HepG2 (cell line): ENCODE measurements at regions of chr12 and their contacts with region 1.

Region 1: DNA sequence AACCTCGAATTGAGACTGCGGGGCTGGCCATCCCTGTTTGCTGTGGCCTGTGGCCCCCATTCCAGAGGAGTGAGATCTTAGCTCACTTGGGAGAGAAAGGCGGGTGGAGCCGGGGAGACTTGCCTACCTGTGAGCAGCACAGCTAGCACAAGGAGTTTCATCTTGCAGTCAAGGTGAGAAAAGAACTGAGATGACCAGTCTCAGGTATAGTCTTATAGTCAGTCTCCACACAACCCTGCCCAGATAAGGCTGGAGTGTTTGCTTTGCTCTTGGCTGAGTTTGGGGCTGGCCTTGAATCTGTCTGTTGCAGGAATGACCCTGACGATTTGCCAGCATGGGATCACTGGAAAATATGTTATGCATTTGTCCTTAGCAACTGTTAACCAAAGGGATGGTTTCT is at the start of gene PLA2G1B:
- DNase-seq: peak; percentile 44
- ATAC-seq: peak; percentile 75
- H3K4me3 ChIP-seq: no peak within 1 kb of the TSS; a peak in 1 of 6 replicates
- H3K27ac ChIP-seq: peak within 1 kb of the TSS; percentile 40
- H3K4me1 ChIP-seq: peaks cover 50% of the 10 kb centered on the region
- H3K27me3 ChIP-seq: peaks cover 0 to 2% of the 10 kb centered on the region in 2 experiments; a peak in 1 of 5 replicates
- CTCF ChIP-seq: no peak
- EP300 ChIP-seq: no peak
- POLR2A ChIP-seq: no peak
- RAD21 ChIP-seq: no peak
- total RNA-seq, gene PLA2G1B: 0.87 and 1.4 TPM in 2 replicates

Region 2: DNA sequence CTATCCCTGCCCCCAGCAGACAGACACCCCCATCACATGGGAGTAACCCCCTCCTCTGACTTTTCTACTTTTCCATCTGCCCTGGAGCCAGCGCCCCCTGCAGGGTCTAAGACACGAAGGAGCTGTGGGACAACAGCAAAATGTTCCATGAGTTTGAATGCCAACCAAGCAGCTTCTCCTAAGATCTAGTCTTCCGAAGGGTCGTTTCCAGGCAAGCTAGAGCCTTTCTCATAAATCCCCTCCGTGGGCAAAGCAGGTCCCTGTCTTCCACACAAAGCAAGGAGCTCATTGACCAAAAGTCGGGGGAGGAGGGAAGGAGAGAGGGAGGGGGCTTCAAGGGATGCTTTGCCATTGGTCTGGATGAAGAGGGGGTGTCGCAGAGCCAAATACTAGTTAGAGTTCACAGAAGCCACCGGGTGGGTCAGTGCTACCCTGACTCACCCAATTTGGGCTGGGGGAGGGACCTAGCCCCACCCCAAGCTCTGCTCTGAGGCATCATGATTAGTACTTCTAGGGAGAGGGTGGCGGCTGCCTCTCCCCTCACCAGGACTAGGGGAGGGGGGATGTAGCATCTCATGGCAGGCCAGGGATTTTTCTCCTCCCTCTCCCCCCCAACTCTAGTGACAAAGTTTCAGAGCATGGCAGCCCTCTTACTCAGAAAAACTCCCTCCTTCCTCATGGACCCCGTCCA is 39.8 kb after region 1 on chr12:
- CTCF ChIA-PET with region 1: no interaction called
- POLR2A ChIA-PET with region 1: no interaction called
- in situ Hi-C with region 1: no loop called
- intact Hi-C with region 1: loop called (anchors 5 kb)
- DNase-seq: no peak
- ATAC-seq: no peak
- H3K4me3 ChIP-seq: no peak overlapping the region; a peak in 1 of 6 replicates
- H3K27ac ChIP-seq: no peak overlapping the region
- H3K4me1 ChIP-seq: peaks cover 40% of the 10 kb centered on the region
- H3K27me3 ChIP-seq: peaks cover 9 to 43% of the 10 kb centered on the region in 2 experiments; a peak in 4 of 5 replicates
- CTCF ChIP-seq: peak; percentile 56
- EP300 ChIP-seq: no peak
- POLR2A ChIP-seq: no peak
- RAD21 ChIP-seq: no peak

Region 3: GRCh38 chr12:120528861-120529525 is 201.4 kb after region 1 on chr12 and contains the start of gene COQ5:
- CTCF ChIA-PET with region 1: no interaction called
- POLR2A ChIA-PET with region 1: no interaction called
- in situ Hi-C with region 1: no loop called
- intact Hi-C with region 1: no loop called
- DNase-seq: peak; percentile 80
- ATAC-seq: peak; percentile 92
- H3K4me3 ChIP-seq: peak within 1 kb of the TSS; percentile 72 to 95 (median 82)
- H3K27ac ChIP-seq: peak within 1 kb of the TSS; percentile 97
- H3K4me1 ChIP-seq: no peaks in the 10 kb centered on the region
- H3K27me3 ChIP-seq: no peaks in the 10 kb centered on the region
- CTCF ChIP-seq: 0 out of 2 replicates have a peak, but pooled peaks have one; percentile 5
- EP300 ChIP-seq: no peak
- POLR2A ChIP-seq: peak; percentile 85 to 86
- RAD21 ChIP-seq: no peak
- total RNA-seq, gene COQ5: 41.5 and 59.8 TPM in 2 replicates